CD4-positive, alpha-beta memory T cell (primary cell): ENCODE measurements at regions of chr11 and their contacts with region 1.

Region 1: DNA sequence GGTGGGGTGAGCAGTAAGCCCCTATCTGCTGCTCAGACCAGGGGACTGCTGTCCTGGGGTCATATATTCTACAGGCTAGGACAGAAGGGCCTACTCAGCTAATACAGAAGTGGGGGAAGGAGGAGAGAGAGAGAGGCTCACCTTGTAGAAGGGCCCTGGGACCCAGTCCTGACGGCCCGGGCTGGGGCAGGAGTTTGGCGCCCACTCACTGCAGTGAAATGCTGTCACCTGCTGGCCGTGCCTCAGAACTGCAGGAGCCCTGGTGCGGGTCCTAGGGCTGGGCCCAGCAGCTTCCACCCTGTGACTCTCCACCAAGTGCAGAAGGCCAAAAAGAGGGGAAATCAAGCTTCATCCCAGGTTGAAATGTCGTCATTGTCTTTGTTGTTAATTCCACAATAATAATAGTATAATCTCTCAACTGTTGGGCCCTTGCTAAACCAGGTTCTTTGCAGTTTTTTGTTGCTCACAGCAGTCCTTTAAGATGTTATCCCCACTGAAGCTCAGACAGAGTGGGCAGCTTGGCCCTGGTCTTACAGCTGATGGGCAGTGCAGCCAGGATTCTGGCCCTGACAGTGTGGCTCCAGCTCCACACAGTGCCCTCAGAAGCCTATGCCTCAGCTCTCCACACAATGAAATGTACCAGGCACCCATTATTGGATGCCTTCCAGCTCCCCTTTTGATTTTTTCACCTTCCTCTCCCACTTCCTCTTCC is 29.6 kb downstream of the TRIM29 start:
- DNase-seq: peak; percentile 19 to 46 (median 26)
- H3K4me3 ChIP-seq: no peak overlapping the region
- H3K4me3 Mint-ChIP-seq: no peak overlapping the region
- H3K27ac ChIP-seq: no peak overlapping the region
- H3K27ac Mint-ChIP-seq: no peak overlapping the region
- H3K4me1 ChIP-seq: no peaks in the 10 kb centered on the region
- H3K4me1 Mint-ChIP-seq: no peaks in the 10 kb centered on the region
- H3K27me3 ChIP-seq: no peaks in the 10 kb centered on the region
- H3K27me3 Mint-ChIP-seq: peaks cover 6 to 19% of the 10 kb centered on the region in 2 donors

Region 2: DNA sequence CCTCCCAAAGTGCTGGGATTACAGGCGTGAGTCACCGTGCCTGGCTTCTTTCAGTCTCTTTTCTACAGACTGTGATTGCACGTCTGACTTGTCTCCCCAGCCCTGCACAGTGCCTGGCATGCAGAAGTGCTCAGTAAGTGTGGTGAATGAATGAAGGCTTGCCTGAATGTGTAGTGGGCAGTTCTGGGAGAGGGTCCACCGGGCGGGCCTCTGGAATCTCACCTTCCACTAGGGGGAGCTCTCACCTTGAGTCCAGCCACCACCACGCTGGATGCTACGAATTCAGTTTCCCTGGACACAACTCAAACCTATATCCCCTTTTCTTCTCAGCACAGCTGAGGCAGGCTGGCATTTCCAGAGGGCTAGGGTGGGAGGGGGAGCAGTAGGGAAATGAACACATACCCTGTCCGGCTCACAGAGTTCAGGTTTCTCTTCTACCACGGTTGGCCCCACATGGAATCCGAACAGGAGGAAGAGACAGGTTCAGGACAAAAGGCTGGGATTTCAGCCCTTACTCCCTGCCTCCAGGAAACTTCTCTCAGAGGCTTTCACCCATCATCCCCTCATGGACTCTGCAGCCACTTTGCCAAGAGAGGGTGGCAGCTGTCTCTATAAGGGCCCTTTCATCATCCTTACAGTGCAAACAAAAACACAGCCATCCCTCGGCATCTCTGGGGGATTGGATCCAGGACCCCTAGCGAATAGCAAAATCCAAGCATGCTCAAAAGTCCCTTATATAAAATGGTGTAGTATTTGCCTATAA is 466.1 kb before region 1 on chr11:
- CTCF ChIA-PET with region 1: interaction called, 4 read pairs
- POLR2A ChIA-PET with region 1: no interaction called
- intact Hi-C with region 1: loop called (anchors 1 kb)
- DNase-seq: no peak
- H3K4me3 ChIP-seq: no peak overlapping the region
- H3K4me3 Mint-ChIP-seq: no peak overlapping the region
- H3K27ac ChIP-seq: no peak overlapping the region
- H3K27ac Mint-ChIP-seq: no peak overlapping the region
- H3K4me1 ChIP-seq: no peaks in the 10 kb centered on the region
- H3K4me1 Mint-ChIP-seq: no peaks in the 10 kb centered on the region
- H3K27me3 ChIP-seq: no peaks in the 10 kb centered on the region
- H3K27me3 Mint-ChIP-seq: peaks cover 2 to 4% of the 10 kb centered on the region in 2 donors

Region 3: DNA sequence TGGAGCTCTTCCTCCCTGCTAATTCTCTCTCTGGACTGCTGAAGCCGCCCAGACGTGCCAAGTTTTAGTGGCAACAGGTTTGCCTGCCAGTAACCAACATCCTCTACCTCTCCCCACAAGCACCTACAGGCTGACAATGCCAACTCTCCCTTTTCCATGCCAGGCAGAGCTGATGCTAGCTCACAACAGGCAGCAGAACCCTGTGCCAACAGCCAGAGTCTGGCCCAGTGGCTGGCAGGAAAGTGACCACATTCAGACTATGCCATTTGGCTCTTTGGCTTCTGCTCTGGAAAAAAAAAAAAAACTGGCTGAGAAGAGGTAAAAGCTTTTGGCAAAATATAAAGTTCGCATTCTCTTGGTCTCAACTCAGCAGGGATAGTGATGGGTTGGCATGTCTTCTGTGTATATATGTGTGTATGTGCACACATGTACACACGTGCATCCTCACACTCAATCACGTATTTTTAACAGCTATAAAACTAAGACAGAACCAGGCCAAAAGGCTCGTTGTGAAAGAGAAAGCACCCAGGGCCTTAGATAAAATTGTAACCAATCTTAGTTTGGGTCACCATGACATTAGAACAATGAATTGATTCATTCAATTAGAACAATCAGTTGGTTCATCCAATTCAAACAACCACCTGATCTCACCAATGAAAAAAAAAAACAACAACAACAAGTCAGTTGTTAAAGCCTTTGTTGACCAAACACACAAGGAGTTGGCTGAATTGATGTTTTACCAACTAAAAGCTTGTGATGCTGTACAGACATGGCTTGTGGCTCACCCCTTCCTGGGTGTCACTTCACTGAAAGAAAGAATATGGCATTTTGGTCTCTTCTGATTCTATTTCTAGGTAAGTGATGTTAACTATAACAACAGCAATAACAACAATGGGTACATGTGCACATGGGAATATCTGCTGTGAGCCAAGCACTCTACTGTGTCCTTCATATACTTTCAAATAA is 19.0 kb before region 1 on chr11:
- CTCF ChIA-PET with region 1: no interaction called
- POLR2A ChIA-PET with region 1: no interaction called
- intact Hi-C with region 1: no loop called
- DNase-seq: no peak
- H3K4me3 ChIP-seq: no peak overlapping the region
- H3K4me3 Mint-ChIP-seq: no peak overlapping the region
- H3K27ac ChIP-seq: no peak overlapping the region
- H3K27ac Mint-ChIP-seq: no peak overlapping the region
- H3K4me1 ChIP-seq: no peaks in the 10 kb centered on the region
- H3K4me1 Mint-ChIP-seq: no peaks in the 10 kb centered on the region
- H3K27me3 ChIP-seq: no peaks in the 10 kb centered on the region
- H3K27me3 Mint-ChIP-seq: peaks cover 2 to 10% of the 10 kb centered on the region in 2 donors

Region 4: GRCh38 chr11:120354068-120354467 is 245.8 kb after region 1 on chr11:
- CTCF ChIA-PET with region 1: no interaction called
- POLR2A ChIA-PET with region 1: no interaction called
- intact Hi-C with region 1: no loop called
- DNase-seq: no peak
- H3K4me3 ChIP-seq: no peak overlapping the region
- H3K4me3 Mint-ChIP-seq: no peak overlapping the region
- H3K27ac ChIP-seq: no peak overlapping the region
- H3K27ac Mint-ChIP-seq: no peak overlapping the region
- H3K4me1 ChIP-seq: no peaks in the 10 kb centered on the region
- H3K4me1 Mint-ChIP-seq: peaks cover 0 to 7% (median under 1%) of the 10 kb centered on the region in 4 donors
- H3K27me3 ChIP-seq: no peaks in the 10 kb centered on the region
- H3K27me3 Mint-ChIP-seq: peaks cover 19 to 26% of the 10 kb centered on the region in 2 donors